Right cardiac atrium (tissue), 5 donors: ENCODE measurements at regions of chr13 and their contacts with region 1.

Region 1: DNA sequence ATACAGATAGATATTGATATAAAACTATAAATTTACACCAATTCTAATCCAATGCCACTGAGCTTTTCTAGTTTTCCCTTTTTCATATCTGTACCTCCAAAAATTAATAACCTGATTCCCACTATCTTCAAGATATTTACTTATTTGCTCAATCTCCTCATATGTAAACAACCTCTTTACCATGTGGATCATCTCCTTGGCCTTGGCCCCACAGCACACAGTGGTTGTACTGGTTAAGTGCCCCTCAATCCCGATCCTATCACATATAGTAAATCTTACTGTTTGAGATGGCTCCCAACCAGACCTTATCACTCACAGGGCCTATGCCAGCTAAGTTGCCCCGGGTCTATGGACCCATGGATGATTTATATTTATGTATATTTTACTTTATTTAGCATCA is 12.4 kb upstream of the DNAJC15 start:
- DNase-seq: no peak
- ATAC-seq: no peak
- H3K4me3 ChIP-seq: no peak overlapping the region
- H3K27ac ChIP-seq: no peak overlapping the region
- H3K4me1 ChIP-seq: no peaks in the 10 kb centered on the region
- H3K27me3 ChIP-seq: no peaks in the 10 kb centered on the region

Region 2: GRCh38 chr13:43031881-43032280 is 20.9 kb after region 1 on chr13:
- intact Hi-C with region 1: loop called in 1 of 4 experiments (anchors 2 kb)
- DNase-seq: no peak
- ATAC-seq: peak in 1 of 2 donors; percentile 47
- H3K4me3 ChIP-seq: no peak overlapping the region
- H3K27ac ChIP-seq: no peak overlapping the region
- H3K4me1 ChIP-seq: peaks cover 9% of the 10 kb centered on the region
- H3K27me3 ChIP-seq: no peaks in the 10 kb centered on the region

Region 3: GRCh38 chr13:43143591-43143990 is 132.6 kb after region 1 on chr13:
- intact Hi-C with region 1: no loop called
- DNase-seq: no peak
- ATAC-seq: no peak
- H3K4me3 ChIP-seq: no peak overlapping the region
- H3K27ac ChIP-seq: no peak overlapping the region
- H3K4me1 ChIP-seq: no peaks in the 10 kb centered on the region
- H3K27me3 ChIP-seq: no peaks in the 10 kb centered on the region

Region 4: DNA sequence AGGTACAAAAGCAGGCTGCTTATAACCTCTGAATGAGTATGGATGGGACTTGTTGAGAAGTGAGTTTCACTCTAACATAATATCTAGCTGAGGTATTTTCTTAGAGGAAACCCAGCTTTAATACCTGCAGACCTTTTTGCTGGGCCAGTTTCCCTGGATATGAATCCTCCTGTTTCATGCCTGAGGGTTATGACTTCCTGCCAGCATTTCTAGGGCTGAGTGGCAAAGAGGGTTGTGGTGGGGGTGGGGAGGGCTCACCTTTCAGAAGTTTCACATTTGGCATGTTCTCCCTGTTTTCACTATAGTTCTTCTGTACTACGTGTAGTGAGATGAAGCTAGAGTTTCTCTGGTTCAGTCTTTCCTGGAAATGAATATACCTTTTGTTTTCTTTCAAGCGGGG is 942.4 kb after region 1 on chr13:
- intact Hi-C with region 1: no loop called
- DNase-seq: no peak
- ATAC-seq: no peak
- H3K4me3 ChIP-seq: no peak overlapping the region
- H3K27ac ChIP-seq: no peak overlapping the region
- H3K4me1 ChIP-seq: no peaks in the 10 kb centered on the region
- H3K27me3 ChIP-seq: no peaks in the 10 kb centered on the region